Head of caudate nucleus (tissue), 42 donors: ENCODE measurements at regions of chr1 and their contacts with region 1.

Region 1: GRCh38 chr1:245156081-245156735 is 1.4 kb downstream of the KIF26B start:
- DNase-seq: peak; percentile 44 to 94 (median 83)

Region 2: DNA sequence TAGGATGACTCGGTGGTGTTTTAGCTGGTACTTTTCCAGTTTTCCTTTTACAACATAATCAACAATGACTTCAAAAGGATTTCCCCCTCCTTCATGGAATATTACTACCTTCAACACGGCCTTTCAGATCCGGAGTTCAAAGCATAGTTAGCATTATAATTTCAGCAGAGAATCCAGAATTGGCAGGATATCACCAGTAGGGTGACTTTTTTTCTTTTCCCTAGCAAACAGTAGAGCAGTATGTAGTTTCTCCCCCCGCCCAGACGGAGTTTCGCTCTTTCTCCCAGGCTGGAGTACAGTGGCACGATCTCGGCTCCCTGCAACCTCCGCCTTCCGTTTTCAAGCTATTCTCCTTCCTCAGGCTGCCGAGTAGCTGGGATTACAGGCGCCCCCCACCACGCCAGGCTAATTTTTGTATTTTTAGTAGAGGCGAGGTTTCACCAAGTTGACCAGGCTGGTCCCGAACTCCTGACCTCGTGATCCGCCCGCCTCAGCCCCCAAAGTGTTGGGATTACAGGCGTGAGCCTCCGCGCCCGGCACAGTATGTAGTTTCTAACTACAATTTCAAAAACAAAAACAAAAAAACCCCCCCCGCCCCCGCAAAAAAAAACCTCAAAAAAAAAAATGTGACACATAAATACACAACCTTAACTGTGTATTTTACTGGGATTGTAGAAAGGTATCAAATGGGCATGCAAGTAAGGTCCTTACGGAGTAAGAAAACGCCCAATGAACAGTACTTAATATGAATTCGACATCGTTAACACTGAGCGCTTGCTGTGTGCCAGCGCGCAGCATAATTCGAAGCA is 322.3 kb before region 1 on chr1:
- intact Hi-C with region 1: no loop called
- DNase-seq: peak; percentile 19 to 82 (median 65)

Region 3: DNA sequence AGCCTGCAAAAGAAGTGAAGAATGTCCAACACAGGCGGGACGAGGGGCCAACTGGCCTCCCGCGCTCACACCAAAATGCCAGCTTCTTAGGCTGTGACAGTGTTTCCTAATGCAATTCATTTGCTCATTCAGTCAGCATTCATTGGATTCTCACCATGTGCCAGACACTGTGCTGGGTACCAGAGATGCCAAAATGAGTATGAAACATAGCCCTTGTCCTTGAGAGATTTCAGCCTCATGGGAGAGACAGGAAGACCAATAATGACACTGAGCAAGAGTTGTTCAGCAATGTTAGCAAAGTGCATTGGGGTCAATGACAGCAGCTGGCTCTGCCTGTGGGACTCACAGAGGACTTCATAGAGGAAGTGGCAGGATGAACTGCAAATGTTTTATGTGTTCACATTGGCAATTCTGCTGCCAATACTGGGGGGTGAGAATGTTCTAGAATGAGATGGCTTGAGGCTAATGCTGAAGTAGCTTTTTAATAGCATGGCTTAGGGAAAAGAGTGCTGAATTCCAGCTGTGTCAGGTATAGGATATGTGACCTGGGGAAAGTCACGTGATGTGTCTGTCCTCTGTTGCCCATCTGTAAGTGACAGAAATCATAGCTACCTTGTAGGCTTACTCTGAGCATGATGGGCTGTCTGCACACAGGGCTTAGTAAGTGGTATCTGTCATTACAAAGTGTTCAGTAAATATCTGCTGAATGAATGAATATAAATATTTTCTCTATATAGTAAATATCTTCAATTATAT is 59.7 kb before region 1 on chr1:
- intact Hi-C with region 1: no loop called
- DNase-seq: peak in 22 of 42 donors; percentile 6 to 53 (median 28)

Region 4: DNA sequence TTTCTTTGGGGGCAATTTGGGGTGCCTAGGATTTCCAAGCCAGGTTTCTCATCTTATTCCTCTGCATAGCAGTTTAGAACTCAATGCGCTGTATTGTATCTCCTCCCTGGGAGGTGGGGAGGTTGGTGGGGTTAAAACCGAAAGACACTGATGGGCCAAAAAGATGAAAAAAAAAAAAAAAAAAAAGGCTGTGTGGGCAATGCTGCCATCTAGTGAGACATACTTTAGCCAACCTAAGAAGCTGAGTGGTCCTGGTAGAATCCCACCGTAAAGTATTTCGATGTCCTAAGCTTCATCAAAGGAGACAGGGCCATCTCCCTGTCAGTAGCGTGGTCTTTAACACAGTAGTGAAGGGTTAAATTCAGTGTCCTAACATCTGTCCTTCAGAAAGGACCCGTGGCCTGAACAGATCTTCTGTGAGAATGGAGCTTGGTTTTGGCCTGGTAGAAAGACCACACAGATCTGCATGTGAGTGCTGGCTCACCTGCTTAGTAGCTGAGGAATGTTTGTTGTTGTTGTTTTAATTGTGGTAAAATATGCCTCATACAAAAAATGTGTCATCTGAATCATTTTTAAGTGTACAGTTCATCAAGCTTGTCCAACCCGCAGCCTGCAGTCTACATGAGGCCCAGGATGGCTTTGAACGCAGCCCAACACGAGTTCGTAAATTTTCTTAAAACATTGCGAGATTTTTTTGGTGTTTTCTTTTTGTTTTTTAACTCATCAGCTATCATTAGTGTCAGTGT is 224.8 kb after region 1 on chr1:
- intact Hi-C with region 1: loop called (anchors 10 kb)
- DNase-seq: no peak

Region 5: DNA sequence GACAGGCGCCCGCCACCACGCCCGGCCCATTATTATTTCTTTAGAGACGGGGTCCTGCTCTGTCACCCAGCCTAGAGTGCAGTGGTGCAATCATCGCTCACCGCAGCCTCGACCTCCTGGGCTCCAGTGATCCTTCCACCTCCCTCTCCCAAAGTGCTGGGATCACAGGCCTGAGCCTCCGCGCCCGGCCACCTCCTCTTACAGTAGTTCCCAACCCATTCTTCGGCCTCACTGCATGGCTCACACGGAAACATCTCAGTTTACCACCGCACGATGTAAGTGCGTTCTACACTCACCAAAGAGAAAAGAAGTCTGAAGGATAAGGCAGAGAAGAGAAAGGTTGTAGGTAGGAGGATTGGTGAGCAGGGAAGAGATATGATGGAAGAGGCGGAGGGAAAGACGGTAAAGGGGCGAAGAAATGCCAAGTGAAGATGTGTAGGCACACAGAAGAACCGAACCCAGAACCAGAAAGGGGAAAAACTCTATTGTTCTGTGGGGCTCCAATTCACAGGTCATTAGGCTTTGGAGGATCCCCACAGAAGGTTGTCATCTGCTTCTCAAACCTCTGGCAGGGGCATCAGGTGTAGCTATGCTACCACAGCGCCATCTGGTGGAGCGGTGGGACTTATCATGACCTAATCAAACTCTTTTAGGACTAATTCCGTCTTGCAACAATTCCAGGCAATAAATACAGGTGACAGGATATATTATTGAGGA is 846.7 kb after region 1 on chr1:
- intact Hi-C with region 1: loop called (anchors 5 kb)
- DNase-seq: peak; percentile 74 to 95 (median 88)